Heart left ventricle (tissue), 16 donors: ENCODE measurements at regions of chr12 and their contacts with region 1.

Region 1: DNA sequence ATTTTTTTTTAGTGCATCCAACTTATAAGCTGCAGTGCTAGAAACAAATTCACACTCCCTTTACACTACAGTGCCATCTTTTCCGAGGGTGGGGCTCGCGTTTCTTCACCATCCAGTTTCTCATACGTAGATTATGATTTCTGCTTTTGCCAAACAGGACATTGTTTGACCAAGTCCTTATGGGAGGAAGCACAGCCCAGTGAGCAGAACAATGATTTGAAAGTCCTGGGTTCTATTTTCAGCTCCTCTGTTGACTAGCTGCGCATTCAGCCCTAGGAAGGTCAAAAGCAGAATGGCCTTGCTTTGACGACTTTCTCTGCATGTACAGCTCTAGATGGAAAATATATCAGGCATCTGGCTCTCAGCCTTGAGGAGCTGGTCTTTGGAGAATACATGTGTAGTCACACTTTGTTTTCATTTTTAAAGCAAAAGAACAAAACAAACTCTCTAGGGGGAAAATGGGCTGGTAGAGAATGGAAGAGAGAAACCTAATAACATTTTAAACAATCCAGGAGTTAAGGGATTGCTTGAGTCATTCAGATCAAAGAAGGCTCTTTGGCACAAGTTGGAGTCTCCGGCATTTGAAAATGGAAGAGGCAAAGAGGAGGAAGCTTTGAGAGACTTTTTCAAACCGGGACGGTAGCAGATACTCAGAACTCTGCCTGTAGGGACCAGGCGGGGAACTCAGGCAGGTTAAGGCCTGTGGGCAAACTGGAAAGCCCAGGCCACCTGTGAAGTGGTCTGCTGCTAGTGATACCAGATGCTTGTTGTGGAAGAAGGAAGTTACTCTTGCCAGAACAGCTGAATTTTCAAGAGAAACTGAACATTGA is 257.3 kb upstream of the PLEKHG7 start:
- DNase-seq: peak in 4 of 5 donors; percentile 34 to 57 (median 52)
- ATAC-seq: peak; percentile 80 to 94 (median 84)
- H3K4me3 ChIP-seq: no peak overlapping the region
- H3K27ac ChIP-seq: peak overlapping the region; percentile 53 to 89 (median 76)
- H3K4me1 ChIP-seq: peaks cover 0 to 44% (median 25%) of the 10 kb centered on the region in 12 donors
- H3K27me3 ChIP-seq: no peaks in the 10 kb centered on the region
- CTCF ChIP-seq: no peak
- POLR2A ChIP-seq: no peak

Region 2: DNA sequence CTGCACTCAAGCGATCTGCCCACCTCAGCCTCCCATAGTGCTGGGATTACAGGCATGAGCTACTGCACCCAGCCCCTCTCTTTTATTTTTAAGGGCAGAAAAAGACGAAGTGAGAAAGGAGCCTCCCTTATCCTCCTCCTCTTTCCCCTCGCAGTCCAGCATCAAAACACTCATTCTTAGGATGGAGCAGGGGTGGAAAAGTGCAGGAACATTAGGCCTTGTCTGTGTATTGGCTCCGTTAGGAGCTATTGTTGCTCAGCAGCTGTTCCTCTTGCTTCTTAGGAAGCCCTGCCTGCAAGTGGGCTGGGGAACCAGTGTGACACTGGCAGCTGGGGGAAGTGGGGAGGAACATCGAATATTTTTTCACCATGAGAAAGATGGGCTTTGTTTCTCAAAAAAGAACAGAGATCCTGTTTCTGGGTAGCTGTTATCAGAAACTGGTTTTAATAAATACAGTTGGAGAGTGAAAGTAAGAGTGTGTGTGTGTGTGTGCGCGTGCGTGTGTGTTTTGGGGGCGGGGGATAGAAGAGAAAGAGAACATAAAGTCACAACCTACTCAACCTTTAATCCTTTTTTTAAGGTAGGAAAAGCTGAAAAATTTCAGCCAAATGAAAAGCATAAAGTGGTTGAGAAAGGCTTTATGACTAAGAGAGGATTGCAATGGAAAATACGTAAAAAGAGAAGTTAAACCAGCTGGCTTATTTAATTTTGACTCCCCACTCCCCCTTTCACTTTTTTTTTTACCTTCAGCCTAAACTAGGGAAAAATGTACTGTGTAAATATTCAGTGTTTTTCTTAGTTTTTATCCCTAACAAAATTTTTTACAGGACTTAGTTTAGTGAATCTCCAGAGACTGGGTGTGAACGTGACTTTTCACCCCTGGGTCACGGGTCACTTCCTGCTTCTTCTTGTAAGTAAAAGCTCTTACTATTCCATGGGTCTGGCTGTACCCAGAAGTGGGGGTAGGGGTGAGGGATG is 60.1 kb after region 1 on chr12:
- intact Hi-C with region 1: loop called in 1 of 10 experiments (anchors 10 kb)
- DNase-seq: peak; percentile 67 to 81 (median 70)
- ATAC-seq: peak; percentile 71 to 87 (median 80)
- H3K4me3 ChIP-seq: peak overlapping the region in 10 of 12 donors; percentile 11 to 40 (median 26)
- H3K27ac ChIP-seq: peak overlapping the region; percentile 55 to 96 (median 85)
- H3K4me1 ChIP-seq: peaks cover 5 to 59% (median 38%) of the 10 kb centered on the region in 12 donors
- H3K27me3 ChIP-seq: no peaks in the 10 kb centered on the region
- CTCF ChIP-seq: no peak
- POLR2A ChIP-seq: no peak